ENCODE measurements at regions of chr10 and their contacts with region 1.

Region 1: GRCh38 chr10:69004821-69005220 is 16.2 kb downstream of the KIFBP start:
- DNase-seq: no peak
- ATAC-seq: peak; percentile 49
- H3K4me3 Mint-ChIP-seq: no peak overlapping the region
- H3K27ac Mint-ChIP-seq: no peak overlapping the region
- H3K4me1 Mint-ChIP-seq: peaks cover 2% of the 10 kb centered on the region
- H3K27me3 Mint-ChIP-seq: no peaks in the 10 kb centered on the region

Region 2: DNA sequence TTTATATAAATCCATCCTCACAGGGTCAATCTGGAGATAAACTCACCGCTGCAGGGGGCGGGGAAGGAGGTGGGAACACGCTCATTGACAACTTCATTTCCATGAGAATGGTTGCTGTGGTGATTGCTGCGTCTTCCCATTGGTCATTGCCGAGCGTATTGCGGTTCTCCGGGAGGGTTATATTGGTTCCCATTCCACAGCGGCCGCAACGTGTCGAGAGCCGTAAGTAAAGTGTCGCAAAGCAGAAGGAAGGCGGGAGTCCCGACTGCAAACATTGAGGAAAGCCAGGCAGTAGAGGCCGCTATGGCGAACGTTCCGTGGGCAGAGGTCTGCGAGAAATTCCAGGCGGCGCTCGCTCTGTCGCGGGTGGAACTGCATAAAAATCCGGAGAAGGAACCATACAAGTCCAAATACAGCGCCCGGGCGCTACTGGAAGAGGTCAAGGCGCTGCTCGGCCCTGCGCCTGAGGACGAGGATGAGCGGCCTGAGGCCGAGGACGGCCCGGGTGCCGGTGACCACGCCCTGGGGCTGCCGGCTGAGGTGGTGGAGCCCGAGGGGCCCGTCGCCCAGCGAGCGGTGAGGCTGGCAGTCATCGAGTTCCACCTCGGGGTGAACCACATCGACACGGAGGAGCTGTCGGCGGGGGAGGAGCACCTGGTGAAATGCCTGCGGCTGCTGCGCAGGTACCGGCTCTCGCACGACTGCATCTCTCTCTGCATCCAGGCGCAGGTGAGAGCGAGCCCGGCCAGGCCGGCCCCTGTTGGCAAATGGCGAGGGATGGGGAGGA is 16.1 kb before region 1 on chr10 and contains the start of gene KIFBP:
- CTCF ChIA-PET with region 1: interaction called, 10 read pairs
- POLR2A ChIA-PET with region 1: no interaction called
- DNase-seq: peak; percentile 90
- ATAC-seq: peak; percentile 88
- H3K4me3 Mint-ChIP-seq: peak within 1 kb of the TSS; percentile 99
- H3K27ac Mint-ChIP-seq: peak within 1 kb of the TSS; percentile 97
- H3K4me1 Mint-ChIP-seq: peaks cover 46% of the 10 kb centered on the region
- H3K27me3 Mint-ChIP-seq: no peaks in the 10 kb centered on the region
- total RNA-seq, gene KIFBP: 13.7 to 16.5 TPM

Region 3: DNA sequence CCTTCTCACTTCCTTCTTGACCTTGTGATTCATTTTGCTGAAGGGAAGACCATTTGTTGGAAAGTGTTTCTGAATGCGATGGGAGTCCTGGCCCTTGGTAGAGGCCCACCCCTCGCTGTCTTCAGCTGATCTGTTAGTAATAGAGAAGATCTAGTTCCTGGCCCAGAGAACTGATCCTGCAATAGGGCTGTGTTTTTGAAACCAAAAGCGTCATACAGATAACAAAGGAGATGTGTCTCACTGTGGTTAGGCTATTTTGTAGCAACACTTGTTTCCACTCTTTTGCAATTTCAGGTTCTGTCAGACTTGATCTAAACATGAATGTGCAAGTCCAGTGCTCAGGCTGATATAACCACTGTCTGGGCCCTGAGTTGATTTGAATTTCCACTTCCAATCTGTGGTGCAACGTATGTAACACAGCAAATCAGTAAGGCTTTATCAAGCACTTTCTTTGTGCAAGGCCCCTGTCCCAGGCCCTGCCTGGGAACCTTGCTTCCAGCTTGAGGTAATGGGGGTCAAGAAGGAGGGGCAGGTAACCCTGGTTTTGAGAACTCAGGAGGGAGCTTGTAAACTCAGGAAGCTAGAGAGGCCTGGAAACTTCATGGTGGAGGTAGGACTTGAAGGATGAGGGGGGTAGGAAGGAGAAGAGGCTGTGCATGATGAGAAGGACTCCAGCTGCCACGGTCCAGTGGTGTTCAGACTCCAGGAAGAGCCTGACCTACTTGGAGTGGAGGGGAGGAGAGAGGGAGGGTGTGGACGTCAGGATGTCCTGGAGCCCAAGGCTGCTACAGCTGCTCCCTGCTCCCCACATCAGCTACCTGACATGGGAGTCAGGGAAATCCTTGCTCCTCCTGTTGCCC is 40.9 kb after region 1 on chr10:
- CTCF ChIA-PET with region 1: interaction called, 24 read pairs
- POLR2A ChIA-PET with region 1: interaction called, 4 read pairs
- DNase-seq: peak; percentile 41
- ATAC-seq: peak; percentile 75
- H3K4me3 Mint-ChIP-seq: peak overlapping the region; percentile 29
- H3K27ac Mint-ChIP-seq: peak overlapping the region; percentile 95
- H3K4me1 Mint-ChIP-seq: peaks cover 44% of the 10 kb centered on the region
- H3K27me3 Mint-ChIP-seq: no peaks in the 10 kb centered on the region

Region 4: DNA sequence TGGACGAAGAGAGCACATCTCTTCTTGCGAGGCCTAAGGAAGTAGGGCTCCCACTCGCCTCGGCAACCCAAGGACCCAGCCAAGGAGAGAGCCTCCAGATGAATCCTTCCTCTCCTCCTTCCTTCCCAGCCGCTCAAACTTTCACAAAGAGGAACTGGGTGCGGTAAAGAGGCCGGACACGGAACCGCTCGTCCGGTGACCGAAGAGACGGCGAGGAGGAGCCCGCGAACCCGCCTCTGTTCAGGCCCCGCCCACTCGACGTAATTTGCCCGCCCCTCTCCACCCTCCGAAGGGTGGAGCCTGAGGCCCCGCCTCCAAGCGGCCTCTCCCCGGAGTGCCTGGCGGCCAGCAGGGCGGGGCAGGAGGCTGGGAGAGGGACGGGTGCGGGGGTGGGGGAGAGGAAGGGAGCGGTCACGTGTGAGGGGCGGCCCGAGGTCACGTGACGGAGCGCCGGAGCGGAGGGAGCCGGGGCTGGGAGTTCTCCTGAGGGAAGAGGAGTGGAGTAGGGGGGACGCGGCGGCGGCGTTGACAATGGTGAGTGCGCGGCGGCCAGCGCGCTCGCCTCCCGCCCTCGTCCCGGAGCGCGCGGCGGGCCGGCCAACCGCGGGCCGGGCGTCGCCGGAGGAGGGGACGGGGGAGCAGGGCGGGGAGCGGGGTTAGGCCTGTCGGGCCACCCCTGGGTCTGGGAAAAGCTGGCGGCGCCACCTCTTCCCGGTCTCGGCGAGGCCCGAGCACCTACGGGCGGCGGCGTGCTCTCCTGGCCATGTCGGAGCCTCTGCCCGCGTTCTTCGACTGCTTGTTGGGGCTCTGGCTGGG is 119.1 kb after region 1 on chr10 and contains the start of gene VPS26A:
- CTCF ChIA-PET with region 1: interaction called, 16 read pairs
- POLR2A ChIA-PET with region 1: no interaction called
- DNase-seq: peak; percentile 99
- ATAC-seq: peak; percentile 94
- H3K4me3 Mint-ChIP-seq: peak within 1 kb of the TSS; percentile 89
- H3K27ac Mint-ChIP-seq: peak within 1 kb of the TSS; percentile 95
- H3K4me1 Mint-ChIP-seq: peaks cover 29% of the 10 kb centered on the region
- H3K27me3 Mint-ChIP-seq: no peaks in the 10 kb centered on the region
- total RNA-seq, gene VPS26A: 53.6 to 61.9 TPM

Measured in activated CD8-positive, alpha-beta T cell treated with anti-CD3 and anti-CD28 coated beads, Interleukin-2, amount 10 ng/mL, durations not matched to agents 7 days and 5 days (primary cell).